ENCODE measurements at regions of chr3 and their contacts with region 1.

Region 1: DNA sequence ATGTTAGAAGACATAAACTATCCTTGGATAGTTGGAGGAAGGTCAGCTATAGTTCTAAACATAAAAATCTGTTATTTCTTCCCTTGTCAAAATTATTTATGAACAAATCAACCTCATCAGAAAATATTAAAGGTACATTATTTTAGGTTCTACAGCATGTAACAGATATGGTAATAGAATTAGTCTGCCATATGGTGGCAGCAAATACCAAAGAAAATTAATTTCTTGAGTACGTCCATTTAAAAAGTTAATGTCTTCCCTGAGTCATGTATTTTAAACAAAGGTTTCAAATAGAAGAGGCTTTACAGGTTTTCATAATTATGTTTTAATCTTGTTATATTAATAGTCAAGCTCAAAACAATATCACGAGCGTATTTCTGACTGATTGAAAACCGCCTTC is 17.9 kb upstream of the ANKRD28 start:
- DNase-seq: peak in 1 of 2 experiments; percentile 10
- H3K4me3 ChIP-seq: no peak overlapping the region
- H3K4me3 Mint-ChIP-seq: no peak overlapping the region
- H3K27ac Mint-ChIP-seq: no peak overlapping the region
- H3K4me1 ChIP-seq: no peaks in the 10 kb centered on the region
- H3K4me1 Mint-ChIP-seq: no peaks in the 10 kb centered on the region
- H3K27me3 ChIP-seq: no peaks in the 10 kb centered on the region
- H3K27me3 Mint-ChIP-seq: no peaks in the 10 kb centered on the region
- CTCF ChIP-seq: peak in 1 of 2 experiments; percentile 11

Region 2: DNA sequence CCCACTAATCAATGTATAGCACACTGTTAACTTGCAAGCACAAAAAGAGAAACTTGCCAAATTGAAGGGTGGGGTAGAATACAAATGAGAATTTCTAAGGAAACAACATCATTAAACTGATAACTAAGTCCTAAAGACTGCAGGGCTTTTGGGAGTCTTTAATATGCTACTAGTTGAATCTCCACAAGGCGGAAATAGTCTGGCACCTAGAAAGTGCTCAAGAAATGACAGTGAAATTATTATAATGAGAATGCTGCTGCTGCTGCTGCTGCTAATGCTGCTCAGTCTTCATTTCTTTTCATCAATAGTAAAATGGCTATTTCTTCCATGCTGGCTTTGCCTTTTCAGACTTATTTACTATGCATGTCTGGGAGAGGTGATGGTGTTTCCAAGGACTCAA is 122.3 kb before region 1 on chr3:
- CTCF ChIA-PET with region 1: no interaction called
- POLR2A ChIA-PET with region 1: no interaction called
- intact Hi-C with region 1: loop called (anchors 5 kb)
- DNase-seq: no peak
- H3K4me3 ChIP-seq: no peak overlapping the region
- H3K4me3 Mint-ChIP-seq: no peak overlapping the region
- H3K27ac Mint-ChIP-seq: no peak overlapping the region
- H3K4me1 ChIP-seq: no peaks in the 10 kb centered on the region
- H3K4me1 Mint-ChIP-seq: no peaks in the 10 kb centered on the region
- H3K27me3 ChIP-seq: no peaks in the 10 kb centered on the region
- H3K27me3 Mint-ChIP-seq: no peaks in the 10 kb centered on the region
- CTCF ChIP-seq: no peak

Region 3: GRCh38 chr3:16048435-16049318 is 233.0 kb after region 1 on chr3:
- CTCF ChIA-PET with region 1: no interaction called
- POLR2A ChIA-PET with region 1: no interaction called
- intact Hi-C with region 1: loop called (anchors 1 kb)
- DNase-seq: peak; percentile 49 to 74
- H3K4me3 ChIP-seq: no peak overlapping the region
- H3K4me3 Mint-ChIP-seq: no peak overlapping the region
- H3K27ac Mint-ChIP-seq: no peak overlapping the region
- H3K4me1 ChIP-seq: no peaks in the 10 kb centered on the region
- H3K4me1 Mint-ChIP-seq: no peaks in the 10 kb centered on the region
- H3K27me3 ChIP-seq: no peaks in the 10 kb centered on the region
- H3K27me3 Mint-ChIP-seq: no peaks in the 10 kb centered on the region
- CTCF ChIP-seq: peak; percentile 75 to 79

Region 4: GRCh38 chr3:16177962-16178627 is 362.4 kb after region 1 on chr3:
- CTCF ChIA-PET with region 1: no interaction called
- POLR2A ChIA-PET with region 1: no interaction called
- intact Hi-C with region 1: loop called (anchors 2 kb)
- DNase-seq: peak; percentile 54 to 81
- H3K4me3 ChIP-seq: no peak overlapping the region
- H3K4me3 Mint-ChIP-seq: no peak overlapping the region
- H3K27ac Mint-ChIP-seq: no peak overlapping the region
- H3K4me1 ChIP-seq: no peaks in the 10 kb centered on the region
- H3K4me1 Mint-ChIP-seq: no peaks in the 10 kb centered on the region
- H3K27me3 ChIP-seq: no peaks in the 10 kb centered on the region; the same call in 1 of the 2 replicates
- H3K27me3 Mint-ChIP-seq: peaks cover 3% of the 10 kb centered on the region
- CTCF ChIP-seq: peak; percentile 82 to 95